ENCODE measurements at regions of chr1 and their contacts with region 1.

Region 1: GRCh38 chr1:77978969-77979876 is at the start of gene FUBP1:
- DNase-seq: peak; percentile 95 to 96
- ATAC-seq: peak; percentile 88 to 91
- H3K4me3 ChIP-seq: peak within 1 kb of the TSS; percentile 69 to 82 (median 79)
- H3K27ac ChIP-seq: peak within 1 kb of the TSS; percentile 91 to 97 (median 94)
- H3K4me1 ChIP-seq: peaks cover 52 to 54% of the 10 kb centered on the region in 2 donors
- H3K27me3 ChIP-seq: no peaks in the 10 kb centered on the region
- CTCF ChIP-seq: peak; percentile 68 to 83 (median 81)
- POLR2A ChIP-seq: peak; percentile 80 to 81
- total RNA-seq, gene FUBP1: 25.6 to 64.3 (median 47.8) TPM

Region 2: DNA sequence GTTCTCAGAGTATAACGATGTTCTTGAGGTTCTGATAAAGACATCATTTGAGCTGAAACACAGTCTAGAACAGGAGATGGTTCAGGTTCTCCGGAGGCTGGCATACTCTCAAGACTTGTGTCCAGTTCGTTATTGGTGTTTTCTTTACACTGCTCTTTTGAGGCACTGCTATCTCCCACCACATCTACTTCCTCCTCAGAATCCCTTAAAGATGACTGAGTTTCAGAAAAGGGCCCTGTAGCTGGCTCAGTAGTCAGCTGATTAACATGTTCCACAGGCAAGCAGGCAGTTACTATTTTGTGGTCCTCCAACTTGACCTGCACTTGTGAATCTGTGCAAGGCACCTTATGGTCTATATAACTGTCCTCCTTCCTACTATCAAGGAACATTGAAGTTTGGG is 347.0 kb before region 1 on chr1:
- in situ Hi-C with region 1: no loop called
- intact Hi-C with region 1: no loop called
- DNase-seq: no peak
- ATAC-seq: no peak
- H3K4me3 ChIP-seq: no peak overlapping the region
- H3K27ac ChIP-seq: no peak overlapping the region
- H3K4me1 ChIP-seq: no peaks in the 10 kb centered on the region
- H3K27me3 ChIP-seq: no peaks in the 10 kb centered on the region
- CTCF ChIP-seq: no peak
- POLR2A ChIP-seq: no peak

Region 3: GRCh38 chr1:77825131-77825709 is 154.0 kb before region 1 on chr1:
- in situ Hi-C with region 1: no loop called
- intact Hi-C with region 1: loop called (anchors 2 kb)
- DNase-seq: peak; percentile 90
- ATAC-seq: peak; percentile 88 to 92
- H3K4me3 ChIP-seq: no peak overlapping the region
- H3K27ac ChIP-seq: peak overlapping the region; percentile 91 to 100 (median 97)
- H3K4me1 ChIP-seq: peaks cover 32 to 44% of the 10 kb centered on the region in 2 donors
- H3K27me3 ChIP-seq: no peaks in the 10 kb centered on the region
- CTCF ChIP-seq: peak in 1 of 5 experiments; percentile 11
- POLR2A ChIP-seq: peak in 1 of 2 donors; percentile 7

Region 4: GRCh38 chr1:77847621-77848080 is 131.6 kb before region 1 on chr1:
- in situ Hi-C with region 1: no loop called
- intact Hi-C with region 1: no loop called
- DNase-seq: no peak
- ATAC-seq: no peak
- H3K4me3 ChIP-seq: no peak overlapping the region
- H3K27ac ChIP-seq: no peak overlapping the region
- H3K4me1 ChIP-seq: peaks cover 0 to 3% of the 10 kb centered on the region in 2 donors
- H3K27me3 ChIP-seq: no peaks in the 10 kb centered on the region
- CTCF ChIP-seq: no peak
- POLR2A ChIP-seq: no peak

Region 5: GRCh38 chr1:77900687-77901293 is 78.4 kb before region 1 on chr1:
- in situ Hi-C with region 1: no loop called
- intact Hi-C with region 1: loop called (anchors 5 kb)
- DNase-seq: no peak
- ATAC-seq: peak; percentile 55 to 59
- H3K4me3 ChIP-seq: peak overlapping the region in 3 of 4 donors; percentile 0 to 24 (median 21)
- H3K27ac ChIP-seq: peak overlapping the region; percentile 74 to 86 (median 80)
- H3K4me1 ChIP-seq: peaks cover 39 to 53% of the 10 kb centered on the region in 2 donors
- H3K27me3 ChIP-seq: no peaks in the 10 kb centered on the region
- CTCF ChIP-seq: peak; percentile 44 to 67 (median 58)
- POLR2A ChIP-seq: no peak

Region 6: DNA sequence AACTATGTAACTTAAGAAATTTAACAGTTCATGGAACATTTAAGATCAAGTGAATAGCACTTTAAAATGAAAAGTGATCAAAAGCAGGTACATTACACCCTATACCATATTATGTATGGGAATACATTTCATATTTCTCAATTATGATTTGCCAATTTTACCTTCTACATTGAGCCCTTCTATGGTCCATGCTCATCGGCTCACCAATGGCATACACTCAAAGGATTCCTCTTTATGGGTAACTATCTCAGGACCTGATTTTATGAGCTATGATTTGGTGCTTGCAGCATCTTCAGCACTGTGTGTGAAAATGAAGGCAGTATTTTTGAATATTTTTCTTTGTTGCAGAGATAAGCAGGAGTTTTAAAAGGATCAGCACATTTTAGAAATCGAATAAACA is 33.9 kb before region 1 on chr1:
- in situ Hi-C with region 1: no loop called
- intact Hi-C with region 1: no loop called
- DNase-seq: no peak
- ATAC-seq: peak; percentile 3 to 4
- H3K4me3 ChIP-seq: no peak overlapping the region
- H3K27ac ChIP-seq: no peak overlapping the region
- H3K4me1 ChIP-seq: peaks cover 0 to 5% of the 10 kb centered on the region in 2 donors
- H3K27me3 ChIP-seq: no peaks in the 10 kb centered on the region
- CTCF ChIP-seq: no peak
- POLR2A ChIP-seq: no peak

Region 7: GRCh38 chr1:78004719-78005447 is 25.7 kb after region 1 on chr1 and contains the start of gene DNAJB4:
- in situ Hi-C with region 1: no loop called
- intact Hi-C with region 1: loop called (anchors 1 kb)
- DNase-seq: peak; percentile 83 to 84
- ATAC-seq: peak; percentile 99
- H3K4me3 ChIP-seq: peak within 1 kb of the TSS; percentile 65 to 81 (median 70)
- H3K27ac ChIP-seq: peak within 1 kb of the TSS; percentile 83 to 97 (median 91)
- H3K4me1 ChIP-seq: peaks cover 19 to 41% of the 10 kb centered on the region in 2 donors
- H3K27me3 ChIP-seq: no peaks in the 10 kb centered on the region
- CTCF ChIP-seq: peak in 1 of 5 experiments; percentile 13
- POLR2A ChIP-seq: peak; percentile 92 to 100
- total RNA-seq, gene DNAJB4: 35.6 to 84.9 (median 45.3) TPM

Region 8: DNA sequence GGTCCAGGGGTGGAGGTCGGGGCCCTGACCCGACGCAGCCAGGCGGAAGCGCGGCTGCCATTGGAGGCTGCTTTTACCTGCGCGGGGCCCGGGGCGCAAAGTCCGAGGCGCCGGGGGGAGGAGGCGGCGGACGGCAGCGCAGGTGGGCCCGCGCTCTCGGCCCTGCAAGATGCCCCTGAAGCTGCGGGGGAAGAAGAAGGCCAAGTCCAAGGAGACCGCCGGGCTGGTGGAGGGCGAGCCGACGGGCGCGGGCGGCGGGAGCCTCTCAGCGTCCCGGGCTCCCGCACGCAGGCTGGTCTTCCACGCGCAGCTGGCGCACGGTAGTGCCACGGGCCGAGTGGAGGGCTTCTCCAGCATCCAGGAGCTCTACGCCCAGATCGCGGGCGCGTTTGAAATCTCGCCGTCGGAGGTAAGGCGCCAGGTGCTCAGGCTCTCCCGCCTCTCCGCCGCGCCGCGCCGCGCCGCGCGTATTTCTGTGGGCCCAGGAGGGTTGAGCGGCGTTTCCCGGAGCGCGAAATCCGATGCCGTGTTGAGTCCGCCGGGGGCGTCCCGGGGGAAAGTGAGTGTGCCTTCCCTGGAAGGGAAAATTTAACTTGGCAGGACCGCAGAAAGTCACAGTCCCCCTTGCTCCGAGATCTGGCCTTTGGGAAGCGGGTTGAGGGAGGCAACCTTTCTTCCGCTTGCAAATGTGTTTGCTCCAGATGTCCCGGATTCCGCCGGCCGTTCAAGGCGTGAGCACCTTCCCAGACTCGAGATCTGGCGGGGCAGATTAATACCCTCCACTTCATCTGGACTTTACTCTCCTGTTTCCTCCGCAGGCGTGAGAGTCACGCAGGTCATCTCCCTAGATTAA is 66.9 kb after region 1 on chr1 and contains the start of gene GIPC2:
- in situ Hi-C with region 1: no loop called
- intact Hi-C with region 1: loop called (anchors 2 kb)
- DNase-seq: peak in 1 of 2 donors; percentile 23
- ATAC-seq: peak; percentile 51 to 75
- H3K4me3 ChIP-seq: peak within 1 kb of the TSS; percentile 66 to 87 (median 76)
- H3K27ac ChIP-seq: peak within 1 kb of the TSS; percentile 70 to 84 (median 78)
- H3K4me1 ChIP-seq: peaks cover 17 to 34% of the 10 kb centered on the region in 2 donors
- H3K27me3 ChIP-seq: no peaks in the 10 kb centered on the region
- CTCF ChIP-seq: no peak
- POLR2A ChIP-seq: peak in 1 of 2 donors; percentile 5
- total RNA-seq, gene GIPC2: 0.67 to 1.5 (median 1.3) TPM

Region 9: DNA sequence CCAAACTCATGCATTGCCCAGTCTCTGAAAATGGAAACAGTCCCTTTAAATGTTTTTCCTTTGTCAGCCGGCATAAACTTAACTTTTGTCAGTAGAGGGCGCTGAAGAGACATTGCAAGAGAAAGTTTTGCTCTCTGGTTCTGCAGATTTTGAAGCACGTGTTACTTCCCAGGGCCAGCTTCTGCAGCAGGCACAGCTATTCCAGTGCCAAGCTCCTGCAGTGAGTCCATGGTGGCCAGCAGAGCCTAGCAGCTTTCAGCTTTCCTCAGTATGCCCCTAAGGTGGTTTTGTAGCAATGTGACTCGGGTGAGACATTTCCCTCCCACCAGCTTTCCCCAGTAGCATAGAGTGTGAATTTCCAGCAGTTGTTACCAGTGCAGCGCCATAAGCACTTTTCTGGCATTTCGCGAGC is 638.4 kb after region 1 on chr1:
- in situ Hi-C with region 1: loop called in 1 of 4 experiments (anchors 25 kb)
- intact Hi-C with region 1: no loop called
- DNase-seq: peak; percentile 41 to 69
- ATAC-seq: peak; percentile 81 to 94
- H3K4me3 ChIP-seq: no peak overlapping the region
- H3K27ac ChIP-seq: peak overlapping the region in 2 of 4 donors; percentile 25 to 70
- H3K4me1 ChIP-seq: peaks cover 16 to 23% of the 10 kb centered on the region in 2 donors
- H3K27me3 ChIP-seq: no peaks in the 10 kb centered on the region
- CTCF ChIP-seq: peak; percentile 63 to 90 (median 75)
- POLR2A ChIP-seq: no peak

Region 10: GRCh38 chr1:78792756-78793155 is 813.5 kb after region 1 on chr1:
- in situ Hi-C with region 1: no loop called
- intact Hi-C with region 1: no loop called
- DNase-seq: no peak
- ATAC-seq: no peak
- H3K4me3 ChIP-seq: no peak overlapping the region
- H3K27ac ChIP-seq: no peak overlapping the region
- H3K4me1 ChIP-seq: no peaks in the 10 kb centered on the region
- H3K27me3 ChIP-seq: no peaks in the 10 kb centered on the region
- CTCF ChIP-seq: no peak
- POLR2A ChIP-seq: no peak

Measured in gastrocnemius medialis (tissue), 4 donors.